Panc1 (cell line): ENCODE measurements at regions of chr14 and their contacts with region 1.

Region 1: DNA sequence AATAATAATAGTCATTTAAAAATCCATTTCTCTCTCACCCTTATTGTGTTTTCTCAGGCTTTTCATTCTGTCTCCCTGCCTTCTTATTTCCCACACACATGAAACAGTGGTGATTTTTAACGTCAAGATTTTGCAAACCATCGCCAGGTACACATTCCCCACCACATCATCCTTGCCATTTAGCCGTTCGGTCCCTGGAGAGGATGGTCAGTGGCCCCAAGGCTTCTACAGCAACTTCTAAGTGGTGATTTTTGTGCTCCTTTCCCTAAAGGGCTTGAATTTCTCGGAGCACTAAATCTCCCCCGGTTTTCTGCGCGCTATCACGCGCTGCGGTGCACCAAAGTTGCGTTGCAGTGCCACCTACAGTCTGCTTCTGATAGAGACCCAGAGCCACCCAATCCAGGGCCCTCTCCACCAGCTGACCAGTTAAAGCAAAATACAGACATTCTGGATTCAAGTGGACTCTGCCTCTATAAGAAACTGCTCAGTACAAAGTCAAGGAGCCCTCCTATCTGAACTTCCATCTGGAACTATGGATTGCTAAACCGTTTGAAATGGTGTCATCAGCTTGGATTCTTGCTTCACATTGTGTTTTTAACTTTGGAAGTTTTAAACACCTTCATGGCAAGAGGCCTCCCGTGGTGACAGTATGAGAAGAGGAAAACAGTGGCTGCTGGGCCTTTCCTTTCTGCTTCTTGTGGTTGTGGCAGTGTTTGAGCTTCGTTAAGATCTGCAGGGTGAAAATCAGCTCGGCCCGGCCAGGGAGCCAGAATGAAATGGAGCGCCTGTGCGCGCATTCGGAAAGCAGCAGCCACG is 234.0 kb downstream of the SPTSSA start:
- DNase-seq: peak; percentile 28
- ATAC-seq: peak; percentile 95
- H3K4me3 ChIP-seq: peak overlapping the region in 1 of 2 experiments; percentile 32; a peak in 1 of 4 replicates
- H3K27ac ChIP-seq: peak overlapping the region; percentile 29; the same call in 1 of the 2 replicates
- H3K4me1 ChIP-seq: no peaks in the 10 kb centered on the region
- H3K27me3 ChIP-seq: no peaks in the 10 kb centered on the region
- CTCF ChIP-seq: peak; percentile 87

Region 2: DNA sequence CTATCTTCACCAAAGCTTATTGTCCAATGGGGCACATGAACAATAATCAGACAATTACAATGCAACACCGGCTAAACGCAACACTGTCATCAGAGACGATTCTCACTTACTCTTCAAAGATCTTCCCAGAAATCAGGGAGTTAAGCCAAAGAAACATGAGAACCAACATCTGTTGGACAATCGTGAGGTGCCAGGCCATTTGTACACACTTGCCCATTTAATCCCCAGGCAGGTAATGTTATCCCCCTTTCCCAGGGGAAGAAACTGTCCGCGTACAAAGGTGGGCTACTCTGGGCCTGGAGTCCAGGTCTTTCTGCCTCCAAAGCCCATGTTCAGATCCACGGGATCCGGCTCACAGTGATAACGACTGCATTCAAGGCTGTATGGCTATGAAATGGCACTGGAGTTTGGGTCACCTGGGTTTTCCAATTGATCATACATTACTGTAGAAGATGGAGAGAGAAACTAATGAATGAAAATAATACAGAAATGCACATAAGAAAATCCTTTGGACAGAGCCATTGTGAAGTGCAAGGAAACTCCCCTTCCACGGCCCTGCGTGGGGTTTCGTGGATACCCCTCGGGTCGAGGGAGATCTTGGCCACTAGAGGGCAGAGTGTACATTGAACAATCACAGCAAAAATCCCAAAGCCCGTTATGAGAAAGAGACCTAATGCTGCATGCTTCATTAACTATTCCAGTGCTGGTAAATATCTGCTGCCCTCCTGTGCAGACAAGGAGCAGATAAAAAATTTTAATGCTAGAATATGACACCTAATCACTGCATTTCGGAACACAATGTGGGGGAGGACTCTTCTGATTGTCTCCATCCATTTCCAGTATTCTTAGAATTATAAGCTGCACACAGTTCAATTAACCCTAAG is 388.6 kb before region 1 on chr14:
- CTCF ChIA-PET with region 1: interaction called, 4 read pairs
- POLR2A ChIA-PET with region 1: no interaction called
- in situ Hi-C with region 1: no loop called
- intact Hi-C with region 1: loop called (anchors 5 kb)
- DNase-seq: peak; percentile 13
- ATAC-seq: no peak; the same call in 1 of the 2 replicates
- H3K4me3 ChIP-seq: no peak overlapping the region
- H3K27ac ChIP-seq: no peak overlapping the region
- H3K4me1 ChIP-seq: no peaks in the 10 kb centered on the region
- H3K27me3 ChIP-seq: no peaks in the 10 kb centered on the region
- CTCF ChIP-seq: peak; percentile 77

Region 3: DNA sequence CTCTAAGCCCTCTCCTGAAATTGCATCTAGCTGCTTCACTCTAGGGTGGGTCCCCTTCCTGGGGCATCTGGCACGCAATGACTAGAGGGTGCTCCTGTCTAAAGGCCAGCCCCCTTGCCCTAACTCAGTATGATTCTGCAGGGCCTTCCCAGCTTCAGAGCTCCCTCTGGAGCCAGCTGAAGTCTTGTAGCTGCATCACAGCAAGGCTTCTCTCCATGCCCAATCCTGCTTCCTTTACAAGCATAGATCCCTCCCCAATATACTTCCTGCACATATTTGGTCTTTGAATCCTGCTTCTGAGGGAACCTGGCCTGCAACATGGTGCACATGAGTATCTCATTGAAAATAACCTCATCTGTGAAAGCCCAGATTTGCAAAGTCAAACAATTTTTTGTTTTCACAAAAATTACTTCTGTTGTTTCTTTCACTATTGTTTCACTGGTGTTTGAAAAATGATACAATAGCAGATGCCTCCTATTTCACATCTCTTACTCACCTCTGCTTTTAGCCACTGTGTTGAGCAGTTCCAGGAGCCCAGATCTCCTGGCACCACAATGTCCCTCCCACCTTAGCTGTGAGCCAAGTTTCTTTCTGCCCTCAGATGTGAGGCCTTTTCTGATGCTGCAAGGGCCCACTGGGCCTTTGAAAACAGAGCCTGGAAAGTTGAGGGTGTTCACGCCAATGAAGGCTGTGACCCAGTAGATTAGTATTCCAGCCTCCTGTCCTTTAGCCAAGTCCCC is 107.6 kb before region 1 on chr14:
- CTCF ChIA-PET with region 1: no interaction called
- POLR2A ChIA-PET with region 1: no interaction called
- in situ Hi-C with region 1: no loop called
- intact Hi-C with region 1: loop called (anchors 10 kb)
- DNase-seq: no peak
- ATAC-seq: no peak
- H3K4me3 ChIP-seq: no peak overlapping the region
- H3K27ac ChIP-seq: no peak overlapping the region
- H3K4me1 ChIP-seq: no peaks in the 10 kb centered on the region
- H3K27me3 ChIP-seq: no peaks in the 10 kb centered on the region
- CTCF ChIP-seq: no peak